ENCODE measurements at regions of chr20 and their contacts with region 1.

Region 1: GRCh38 chr20:38387953-38388352 is 41.7 kb downstream of the LBP start:
- DNase-seq: no peak
- ATAC-seq: no peak
- H3K4me3 ChIP-seq: no peak overlapping the region
- H3K27ac ChIP-seq: no peak overlapping the region
- H3K4me1 ChIP-seq: no peaks in the 10 kb centered on the region
- H3K27me3 ChIP-seq: peaks cover 37% of the 10 kb centered on the region
- CTCF ChIP-seq: no peak
- POLR2A ChIP-seq: no peak
- RAD21 ChIP-seq: no peak

Region 2: DNA sequence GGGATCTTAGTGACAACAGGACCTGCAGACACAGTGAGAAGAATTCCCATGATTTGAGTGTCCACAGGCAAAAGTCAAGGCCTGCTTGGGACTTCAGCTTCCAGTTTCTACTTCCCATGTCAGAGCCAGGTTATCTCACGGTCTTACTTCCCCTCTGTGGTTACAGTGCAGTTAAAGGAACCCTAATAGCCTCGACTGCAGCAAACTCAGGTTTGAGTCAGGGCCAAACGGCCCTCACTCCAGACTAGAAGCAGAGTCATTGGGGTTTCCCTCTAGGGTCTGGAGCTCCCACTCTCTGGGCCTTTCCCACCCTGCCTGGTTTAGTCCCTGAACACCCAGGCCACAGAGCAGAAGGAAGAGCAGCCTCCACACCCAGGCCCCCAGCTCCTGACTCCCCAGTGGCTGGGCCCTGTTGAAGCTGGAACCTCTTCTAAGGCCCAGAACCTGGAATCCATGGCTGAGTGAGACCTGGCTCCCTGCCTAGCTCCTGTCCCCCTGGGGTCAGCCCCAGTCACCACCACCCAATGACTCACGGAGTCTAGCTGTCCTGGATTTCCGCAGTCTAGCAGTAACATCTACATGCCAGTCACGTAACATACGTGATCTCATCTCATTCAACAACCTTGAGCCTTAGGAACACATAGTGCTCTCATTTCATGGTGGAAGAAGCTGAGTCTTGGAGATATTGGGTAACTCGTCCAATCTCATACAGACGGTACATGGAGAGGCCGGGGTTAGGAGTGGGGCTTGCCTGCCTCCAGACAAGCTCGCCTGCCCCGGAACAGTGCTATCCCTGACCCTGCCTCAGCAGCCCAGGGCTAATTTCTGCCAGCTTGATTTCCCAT is 1117.2 kb before region 1 on chr20:
- CTCF ChIA-PET with region 1: no interaction called
- POLR2A ChIA-PET with region 1: no interaction called
- dilution Hi-C with region 1: no loop called
- in situ Hi-C with region 1: loop called (anchors 25 kb)
- intact Hi-C with region 1: no loop called
- DNase-seq: peak; percentile 50
- ATAC-seq: no peak
- H3K4me3 ChIP-seq: no peak overlapping the region
- H3K27ac ChIP-seq: no peak overlapping the region
- H3K4me1 ChIP-seq: no peaks in the 10 kb centered on the region; the same call in 1 of the 2 replicates
- H3K27me3 ChIP-seq: peaks cover 7% of the 10 kb centered on the region
- CTCF ChIP-seq: no peak
- POLR2A ChIP-seq: no peak
- RAD21 ChIP-seq: no peak

Region 3: DNA sequence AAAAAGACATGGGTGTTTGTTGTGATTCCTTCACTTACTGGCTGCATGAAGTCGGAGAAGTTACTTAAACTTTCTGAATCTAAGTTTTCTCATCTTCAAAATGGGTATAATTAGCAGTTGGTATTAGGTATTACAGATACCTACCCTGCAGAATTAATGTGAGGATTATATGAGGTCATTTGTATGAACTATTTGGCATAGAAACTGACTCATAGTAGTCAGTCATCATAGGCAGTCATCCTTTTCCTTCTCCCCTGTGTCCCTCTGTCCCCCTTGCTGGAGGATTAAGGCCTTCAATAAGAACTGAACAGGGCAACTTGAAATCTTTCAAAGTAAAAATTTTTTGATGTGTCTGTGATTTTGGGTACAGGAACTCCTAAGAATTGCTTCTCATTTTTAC is 111.0 kb after region 1 on chr20:
- CTCF ChIA-PET with region 1: no interaction called
- POLR2A ChIA-PET with region 1: no interaction called
- dilution Hi-C with region 1: no loop called
- in situ Hi-C with region 1: no loop called
- intact Hi-C with region 1: no loop called
- DNase-seq: peak; percentile 13
- ATAC-seq: no peak
- H3K4me3 ChIP-seq: no peak overlapping the region
- H3K27ac ChIP-seq: no peak overlapping the region
- H3K4me1 ChIP-seq: 0 out of 2 replicates have a peak, but pooled peaks cover 2% of the 10 kb centered on the region
- H3K27me3 ChIP-seq: no peaks in the 10 kb centered on the region
- CTCF ChIP-seq: no peak
- POLR2A ChIP-seq: no peak
- RAD21 ChIP-seq: no peak

Measured in IMR-90 (cell line).